SK-N-SH (cell line): ENCODE measurements at regions of chr20 and their contacts with region 1.

Region 1: DNA sequence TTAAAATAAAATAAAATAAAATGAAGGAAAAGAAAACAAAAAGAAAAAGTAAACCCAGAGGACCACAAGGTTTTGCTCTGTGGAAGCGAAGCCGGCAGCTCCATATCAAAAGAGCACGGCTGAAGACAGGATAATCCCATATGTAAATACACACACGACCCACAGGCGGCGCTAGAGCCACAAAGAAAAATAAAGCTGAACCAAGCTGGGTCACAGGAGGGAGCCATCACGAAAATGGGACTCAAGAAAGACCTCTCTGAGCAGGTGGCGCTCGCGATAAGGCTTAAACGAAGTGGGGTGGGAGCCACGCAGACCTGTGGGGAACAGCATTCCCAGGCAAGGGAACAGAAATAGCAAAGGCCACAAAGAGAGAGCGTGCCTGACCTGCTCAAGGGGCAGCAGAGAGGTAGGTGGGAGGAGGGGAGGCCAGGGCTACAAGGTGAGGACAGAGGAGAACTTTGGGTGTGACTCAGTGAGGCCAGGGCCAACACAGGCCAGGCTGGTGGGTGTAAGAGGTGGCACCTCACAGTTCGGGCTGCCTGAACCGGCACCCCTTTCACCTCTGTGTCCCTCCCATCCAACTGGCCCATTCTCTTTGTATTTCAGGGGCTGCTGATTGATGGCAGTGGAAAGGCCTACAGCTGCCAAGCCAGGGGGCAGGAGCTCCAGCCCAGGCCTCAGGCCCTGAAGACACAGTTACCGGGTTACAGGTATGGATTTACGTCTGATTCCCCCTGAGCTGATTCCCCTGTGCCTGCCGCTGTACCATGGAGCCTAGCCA is 26.0 kb downstream of the PTGIS start:
- DNase-seq: peak; percentile 78
- H3K4me3 ChIP-seq: no peak overlapping the region; a peak in 1 of 4 replicates
- H3K27ac ChIP-seq: no peak overlapping the region
- H3K4me1 ChIP-seq: no peaks in the 10 kb centered on the region
- H3K27me3 ChIP-seq: no peaks in the 10 kb centered on the region
- CTCF ChIP-seq: peak; percentile 78
- EP300 ChIP-seq: no peak
- RAD21 ChIP-seq: peak; percentile 89

Region 2: GRCh38 chr20:49460916-49461315 is 81.0 kb before region 1 on chr20:
- CTCF ChIA-PET with region 1: no interaction called
- POLR2A ChIA-PET with region 1: no interaction called
- DNase-seq: no peak
- H3K4me3 ChIP-seq: no peak overlapping the region
- H3K27ac ChIP-seq: no peak overlapping the region
- H3K4me1 ChIP-seq: peaks cover 0 to 13% of the 10 kb centered on the region in 2 experiments; a peak in 1 of 4 replicates
- H3K27me3 ChIP-seq: no peaks in the 10 kb centered on the region
- CTCF ChIP-seq: no peak
- EP300 ChIP-seq: peak in 1 of 2 experiments; percentile 23; a peak in 1 of 4 replicates
- RAD21 ChIP-seq: no peak

Region 3: GRCh38 chr20:49508435-49509199 is 33.3 kb before region 1 on chr20:
- CTCF ChIA-PET with region 1: interaction called, 78 read pairs
- POLR2A ChIA-PET with region 1: no interaction called
- DNase-seq: peak; percentile 74
- H3K4me3 ChIP-seq: no peak overlapping the region
- H3K27ac ChIP-seq: no peak overlapping the region
- H3K4me1 ChIP-seq: peaks cover 10 to 15% of the 10 kb centered on the region in 2 experiments; a peak in 2 of 4 replicates
- H3K27me3 ChIP-seq: no peaks in the 10 kb centered on the region
- CTCF ChIP-seq: peak; percentile 69
- EP300 ChIP-seq: no peak
- RAD21 ChIP-seq: peak; percentile 74

Region 4: GRCh38 chr20:49568471-49569161 is 26.7 kb after region 1 on chr20:
- CTCF ChIA-PET with region 1: interaction called, 19 read pairs
- POLR2A ChIA-PET with region 1: no interaction called
- DNase-seq: no peak
- H3K4me3 ChIP-seq: no peak overlapping the region
- H3K27ac ChIP-seq: no peak overlapping the region
- H3K4me1 ChIP-seq: peaks cover 0 to 8% of the 10 kb centered on the region in 2 experiments; a peak in 1 of 4 replicates
- H3K27me3 ChIP-seq: no peaks in the 10 kb centered on the region; the same call in 1 of the 2 replicates
- CTCF ChIP-seq: no peak
- EP300 ChIP-seq: no peak
- RAD21 ChIP-seq: no peak

Region 5: GRCh38 chr20:49594143-49594930 is 52.4 kb after region 1 on chr20:
- CTCF ChIA-PET with region 1: interaction called, 25 read pairs
- POLR2A ChIA-PET with region 1: no interaction called
- DNase-seq: no peak
- H3K4me3 ChIP-seq: no peak overlapping the region
- H3K27ac ChIP-seq: no peak overlapping the region
- H3K4me1 ChIP-seq: peaks cover 0 to 5% of the 10 kb centered on the region in 2 experiments; a peak in 1 of 4 replicates
- H3K27me3 ChIP-seq: no peaks in the 10 kb centered on the region
- CTCF ChIP-seq: no peak
- EP300 ChIP-seq: no peak
- RAD21 ChIP-seq: no peak

Region 6: GRCh38 chr20:49700411-49701185 is 158.7 kb after region 1 on chr20:
- CTCF ChIA-PET with region 1: no interaction called
- POLR2A ChIA-PET with region 1: no interaction called
- DNase-seq: no peak
- H3K4me3 ChIP-seq: peak overlapping the region in 1 of 2 experiments; percentile 25; a peak in 1 of 4 replicates
- H3K27ac ChIP-seq: peak overlapping the region; percentile 29 to 80
- H3K4me1 ChIP-seq: peaks cover 23 to 37% of the 10 kb centered on the region in 2 experiments; a peak in 3 of 4 replicates
- H3K27me3 ChIP-seq: no peaks in the 10 kb centered on the region
- CTCF ChIP-seq: no peak
- EP300 ChIP-seq: no peak; a peak in 1 of 4 replicates
- RAD21 ChIP-seq: no peak

Region 7: GRCh38 chr20:49853640-49854039 is 311.7 kb after region 1 on chr20:
- CTCF ChIA-PET with region 1: interaction called, 31 read pairs
- POLR2A ChIA-PET with region 1: no interaction called
- DNase-seq: peak; percentile 45
- H3K4me3 ChIP-seq: no peak overlapping the region
- H3K27ac ChIP-seq: peak overlapping the region in 1 of 2 experiments; percentile 84; a peak in 2 of 4 replicates
- H3K4me1 ChIP-seq: peaks cover 4 to 25% of the 10 kb centered on the region in 2 experiments; a peak in 3 of 4 replicates
- H3K27me3 ChIP-seq: no peaks in the 10 kb centered on the region
- CTCF ChIP-seq: no peak
- EP300 ChIP-seq: no peak
- RAD21 ChIP-seq: no peak